ENCODE measurements at regions of chrX and their contacts with region 1.

Region 1: GRCh38 chrX:140526171-140526570 is 21.3 kb upstream of the SOX3 start:
- DNase-seq: no peak
- H3K4me3 ChIP-seq: no peak overlapping the region
- H3K27ac ChIP-seq: no peak overlapping the region
- H3K4me1 ChIP-seq: no peaks in the 10 kb centered on the region
- H3K27me3 ChIP-seq: no peaks in the 10 kb centered on the region
- CTCF ChIP-seq: no peak

Region 2: DNA sequence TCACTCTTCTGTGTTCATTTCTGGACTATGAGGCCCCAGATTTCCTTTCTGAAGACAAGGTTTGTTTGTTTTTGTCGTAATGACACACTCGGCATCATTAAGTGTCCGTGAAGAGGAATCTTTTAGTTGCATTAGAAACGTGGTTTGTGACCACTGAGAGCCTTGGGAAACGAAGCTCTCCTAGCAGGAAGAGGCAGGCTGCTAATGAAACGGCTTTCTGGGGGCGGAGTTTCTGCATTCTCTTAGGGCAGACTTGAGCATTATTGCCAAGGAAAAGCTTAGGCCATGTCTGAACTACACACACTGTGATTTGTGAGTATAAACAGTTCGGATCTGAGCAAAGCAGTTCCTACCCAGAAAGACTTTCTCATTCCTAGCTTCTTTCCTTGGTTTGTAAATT is 85.3 kb before region 1 on chrX:
- CTCF ChIA-PET with region 1: no interaction called
- dilution Hi-C with region 1: loop called (anchors 10 kb)
- in situ Hi-C with region 1: no loop called
- intact Hi-C with region 1: no loop called
- DNase-seq: no peak
- H3K4me3 ChIP-seq: no peak overlapping the region
- H3K27ac ChIP-seq: no peak overlapping the region
- H3K4me1 ChIP-seq: no peaks in the 10 kb centered on the region
- H3K27me3 ChIP-seq: no peaks in the 10 kb centered on the region
- CTCF ChIP-seq: no peak

Region 3: GRCh38 chrX:140480765-140481164 is 45.4 kb before region 1 on chrX:
- CTCF ChIA-PET with region 1: no interaction called
- dilution Hi-C with region 1: no loop called
- in situ Hi-C with region 1: loop called in 1 of 2 experiments (anchors 10 kb)
- intact Hi-C with region 1: no loop called
- DNase-seq: no peak
- H3K4me3 ChIP-seq: no peak overlapping the region
- H3K27ac ChIP-seq: no peak overlapping the region
- H3K4me1 ChIP-seq: no peaks in the 10 kb centered on the region
- H3K27me3 ChIP-seq: no peaks in the 10 kb centered on the region
- CTCF ChIP-seq: no peak

Region 4: GRCh38 chrX:140580478-140580877 is 54.3 kb after region 1 on chrX:
- CTCF ChIA-PET with region 1: no interaction called
- dilution Hi-C with region 1: no loop called
- in situ Hi-C with region 1: no loop called
- intact Hi-C with region 1: no loop called
- DNase-seq: no peak
- H3K4me3 ChIP-seq: no peak overlapping the region
- H3K27ac ChIP-seq: no peak overlapping the region
- H3K4me1 ChIP-seq: no peaks in the 10 kb centered on the region
- H3K27me3 ChIP-seq: no peaks in the 10 kb centered on the region
- CTCF ChIP-seq: no peak